ENCODE measurements at regions of chrX and their contacts with region 1.

Region 1: GRCh38 chrX:130339408-130340222 is at the start of gene SLC25A14:
- DNase-seq: peak; percentile 32 to 86 (median 71)
- ATAC-seq: peak; percentile 88
- H3K4me3 ChIP-seq: peak within 1 kb of the TSS; percentile 60 to 83
- H3K4me3 Mint-ChIP-seq: peak within 1 kb of the TSS; percentile 95
- H3K27ac ChIP-seq: peak within 1 kb of the TSS; percentile 36 to 83
- H3K27ac Mint-ChIP-seq: peak within 1 kb of the TSS; percentile 83
- H3K4me1 ChIP-seq: no peaks in the 10 kb centered on the region
- H3K4me1 Mint-ChIP-seq: peaks cover 20% of the 10 kb centered on the region
- H3K27me3 ChIP-seq: no peaks in the 10 kb centered on the region
- H3K27me3 Mint-ChIP-seq: no peaks in the 10 kb centered on the region
- CTCF ChIP-seq: no peak
- total RNA-seq, gene SLC25A14: 11.9 to 13.4 TPM

Region 2: GRCh38 chrX:130351567-130351966 is 12.0 kb after region 1 on chrX:
- CTCF ChIA-PET with region 1: no interaction called
- POLR2A ChIA-PET with region 1: no interaction called
- intact Hi-C with region 1: no loop called
- DNase-seq: no peak
- ATAC-seq: no peak
- H3K4me3 ChIP-seq: no peak overlapping the region
- H3K4me3 Mint-ChIP-seq: no peak overlapping the region
- H3K27ac ChIP-seq: no peak overlapping the region
- H3K27ac Mint-ChIP-seq: no peak overlapping the region
- H3K4me1 ChIP-seq: no peaks in the 10 kb centered on the region
- H3K4me1 Mint-ChIP-seq: no peaks in the 10 kb centered on the region
- H3K27me3 ChIP-seq: no peaks in the 10 kb centered on the region
- H3K27me3 Mint-ChIP-seq: no peaks in the 10 kb centered on the region
- CTCF ChIP-seq: no peak

Region 3: GRCh38 chrX:130401415-130402207 is 62.0 kb after region 1 on chrX and contains the start of gene RBMX2:
- CTCF ChIA-PET with region 1: no interaction called
- POLR2A ChIA-PET with region 1: no interaction called
- intact Hi-C with region 1: loop called (anchors 1 kb)
- DNase-seq: peak; percentile 37 to 88 (median 68)
- ATAC-seq: peak; percentile 85
- H3K4me3 ChIP-seq: peak within 1 kb of the TSS; percentile 63 to 99
- H3K4me3 Mint-ChIP-seq: peak within 1 kb of the TSS; percentile 87
- H3K27ac ChIP-seq: peak within 1 kb of the TSS; percentile 73 to 76
- H3K27ac Mint-ChIP-seq: peak within 1 kb of the TSS; percentile 91
- H3K4me1 ChIP-seq: peaks cover 12% of the 10 kb centered on the region
- H3K4me1 Mint-ChIP-seq: peaks cover 27% of the 10 kb centered on the region
- H3K27me3 ChIP-seq: no peaks in the 10 kb centered on the region
- H3K27me3 Mint-ChIP-seq: no peaks in the 10 kb centered on the region
- CTCF ChIP-seq: no peak
- total RNA-seq, gene RBMX2: 19.4 to 20.7 TPM

Region 4: DNA sequence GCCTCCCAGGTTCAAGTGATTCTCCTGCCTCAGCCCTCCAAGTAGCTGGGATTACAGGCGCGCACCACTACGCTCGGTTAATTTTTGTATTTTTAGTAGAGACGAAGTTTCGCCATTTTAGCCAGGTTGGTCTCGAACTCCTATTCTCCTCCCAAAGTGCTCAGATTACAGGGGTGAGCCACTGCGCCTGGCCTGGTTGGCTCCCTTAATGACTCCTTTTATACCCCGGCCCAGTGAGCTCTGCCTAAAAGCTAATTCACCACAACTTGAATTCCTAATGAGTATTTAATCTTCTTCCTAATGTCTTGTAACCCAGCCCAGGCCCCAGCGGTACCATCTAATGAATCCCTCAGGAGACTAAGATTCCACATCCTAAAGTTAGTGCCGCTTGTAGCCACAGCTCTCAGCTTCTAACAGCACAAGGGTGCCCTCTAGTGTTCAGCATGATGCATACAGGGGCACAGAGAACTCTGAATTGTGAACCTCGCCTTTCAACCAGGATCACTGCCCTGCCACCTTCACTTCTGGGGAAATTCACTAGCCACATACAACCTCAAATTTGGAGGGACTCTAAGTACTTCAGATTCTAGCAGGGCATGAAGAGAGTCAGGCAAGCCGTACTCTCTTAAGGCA is 1293.8 kb after region 1 on chrX:
- CTCF ChIA-PET with region 1: no interaction called
- POLR2A ChIA-PET with region 1: no interaction called
- intact Hi-C with region 1: loop called in 1 of 2 experiments (anchors 10 kb)
- DNase-seq: peak in 8 of 9 experiments; percentile 0 to 58 (median 31)
- ATAC-seq: no peak
- H3K4me3 ChIP-seq: no peak overlapping the region
- H3K4me3 Mint-ChIP-seq: no peak overlapping the region
- H3K27ac ChIP-seq: no peak overlapping the region
- H3K27ac Mint-ChIP-seq: no peak overlapping the region
- H3K4me1 ChIP-seq: no peaks in the 10 kb centered on the region
- H3K4me1 Mint-ChIP-seq: no peaks in the 10 kb centered on the region
- H3K27me3 ChIP-seq: no peaks in the 10 kb centered on the region
- H3K27me3 Mint-ChIP-seq: no peaks in the 10 kb centered on the region
- CTCF ChIP-seq: peak; percentile 34